B cell (primary cell): ENCODE measurements at regions of chr6 and their contacts with region 1.

Region 1: GRCh38 chr6:142946181-142946923 is 1.4 kb upstream of the HIVEP2 start:
- DNase-seq: peak; percentile 93
- ATAC-seq: peak; percentile 28
- H3K4me3 ChIP-seq: peak overlapping the region; percentile 85 to 96 (median 90)
- H3K4me3 Mint-ChIP-seq: peak overlapping the region; percentile 99
- H3K27ac ChIP-seq: peak overlapping the region; percentile 100
- H3K27ac Mint-ChIP-seq: peak overlapping the region; percentile 99
- H3K4me1 ChIP-seq: peaks cover 19 to 29% of the 10 kb centered on the region in 2 donors
- H3K4me1 Mint-ChIP-seq: peaks cover 43% of the 10 kb centered on the region
- H3K27me3 ChIP-seq: no peaks in the 10 kb centered on the region
- H3K27me3 Mint-ChIP-seq: no peaks in the 10 kb centered on the region
- CTCF ChIP-seq: no peak

Region 2: GRCh38 chr6:142845624-142846458 is 100.5 kb before region 1 on chr6:
- CTCF ChIA-PET with region 1: interaction called, 3 read pairs
- POLR2A ChIA-PET with region 1: interaction called, 5 read pairs
- intact Hi-C with region 1: loop called (anchors 1 kb)
- DNase-seq: peak; percentile 43
- ATAC-seq: peak; percentile 66
- H3K4me3 ChIP-seq: peak overlapping the region; percentile 15 to 71 (median 41)
- H3K4me3 Mint-ChIP-seq: peak overlapping the region; percentile 95
- H3K27ac ChIP-seq: peak overlapping the region; percentile 86 to 94
- H3K27ac Mint-ChIP-seq: peak overlapping the region; percentile 97
- H3K4me1 ChIP-seq: peaks cover 74 to 78% of the 10 kb centered on the region in 2 donors
- H3K4me1 Mint-ChIP-seq: peaks cover 90% of the 10 kb centered on the region
- H3K27me3 ChIP-seq: no peaks in the 10 kb centered on the region
- H3K27me3 Mint-ChIP-seq: no peaks in the 10 kb centered on the region
- CTCF ChIP-seq: no peak

Region 3: GRCh38 chr6:142913511-142914047 is 32.8 kb before region 1 on chr6:
- CTCF ChIA-PET with region 1: interaction called, 3 read pairs
- POLR2A ChIA-PET with region 1: no interaction called
- intact Hi-C with region 1: loop called (anchors 1 kb)
- DNase-seq: peak; percentile 92
- ATAC-seq: peak; percentile 95
- H3K4me3 ChIP-seq: peak overlapping the region in 4 of 5 experiments; percentile 9 to 60 (median 24)
- H3K4me3 Mint-ChIP-seq: peak overlapping the region; percentile 91
- H3K27ac ChIP-seq: peak overlapping the region; percentile 93
- H3K27ac Mint-ChIP-seq: peak overlapping the region; percentile 99
- H3K4me1 ChIP-seq: peaks cover 21 to 22% of the 10 kb centered on the region in 2 donors
- H3K4me1 Mint-ChIP-seq: peaks cover 40% of the 10 kb centered on the region
- H3K27me3 ChIP-seq: no peaks in the 10 kb centered on the region
- H3K27me3 Mint-ChIP-seq: no peaks in the 10 kb centered on the region
- CTCF ChIP-seq: peak; percentile 63

Region 4: GRCh38 chr6:142935553-142936517 is 10.5 kb before region 1 on chr6:
- CTCF ChIA-PET with region 1: interaction called, 6 read pairs
- POLR2A ChIA-PET with region 1: interaction called, 3 read pairs
- intact Hi-C with region 1: loop called (anchors 1 kb)
- DNase-seq: peak; percentile 72
- ATAC-seq: peak; percentile 79
- H3K4me3 ChIP-seq: peak overlapping the region in 3 of 5 experiments; percentile 25 to 37 (median 36)
- H3K4me3 Mint-ChIP-seq: peak overlapping the region; percentile 86
- H3K27ac ChIP-seq: peak overlapping the region; percentile 34 to 65
- H3K27ac Mint-ChIP-seq: peak overlapping the region; percentile 89
- H3K4me1 ChIP-seq: peaks cover 35 to 48% of the 10 kb centered on the region in 2 donors
- H3K4me1 Mint-ChIP-seq: peaks cover 76% of the 10 kb centered on the region
- H3K27me3 ChIP-seq: no peaks in the 10 kb centered on the region
- H3K27me3 Mint-ChIP-seq: no peaks in the 10 kb centered on the region
- CTCF ChIP-seq: no peak